ENCODE measurements at regions of chr1 and their contacts with region 1.

Region 1: DNA sequence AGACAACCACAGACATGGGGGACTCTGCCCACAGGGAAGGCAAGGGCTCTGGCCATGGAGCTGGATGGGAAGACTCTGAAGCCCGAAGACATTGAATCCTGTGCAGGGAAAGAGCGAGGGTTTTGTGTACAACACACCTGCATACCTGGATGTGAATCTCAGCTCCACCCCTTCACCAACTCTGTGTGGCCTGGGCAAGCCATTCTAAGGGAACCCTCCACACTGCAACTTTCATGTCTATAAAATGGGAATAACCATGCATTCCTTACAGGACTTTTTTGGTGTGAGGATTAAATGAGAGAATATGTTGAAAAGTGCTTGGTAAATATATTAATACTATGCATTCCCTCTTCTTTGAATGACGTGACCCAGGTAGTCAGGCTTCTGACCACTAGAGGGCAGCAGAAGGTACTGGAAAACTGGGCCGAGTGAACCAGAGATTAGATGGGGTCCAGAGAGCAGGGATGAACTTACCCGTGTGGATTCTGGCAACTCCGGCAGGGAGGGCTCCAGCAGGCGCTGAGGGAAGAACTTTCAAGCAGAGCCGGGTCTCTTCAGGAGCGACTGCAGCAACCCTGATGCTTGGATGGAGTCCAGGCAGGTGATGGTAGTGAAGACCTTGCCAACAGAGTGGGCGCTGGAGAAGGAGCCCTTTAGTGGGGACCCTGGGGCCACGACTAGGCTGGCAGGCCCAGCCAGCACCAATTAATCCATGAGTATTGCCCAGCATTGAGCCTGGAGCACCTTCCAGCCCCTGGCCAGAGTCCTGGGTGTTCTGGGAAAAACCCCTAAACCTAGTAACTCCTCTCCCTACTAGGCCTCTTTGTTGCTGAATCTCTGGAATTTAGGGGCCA is 834 bp upstream of the ELF3 start:
- DNase-seq: peak; percentile 34 to 45 (median 35)
- H3K4me3 ChIP-seq: no peak overlapping the region
- H3K4me3 Mint-ChIP-seq: no peak overlapping the region
- H3K27ac ChIP-seq: no peak overlapping the region
- H3K27ac Mint-ChIP-seq: peak overlapping the region in 1 of 7 donors; percentile 13
- H3K4me1 ChIP-seq: no peaks in the 10 kb centered on the region
- H3K4me1 Mint-ChIP-seq: no peaks in the 10 kb centered on the region
- H3K27me3 ChIP-seq: no peaks in the 10 kb centered on the region
- H3K27me3 Mint-ChIP-seq: peaks cover 0 to 2% (median 1%) of the 10 kb centered on the region in 3 donors
- CTCF ChIP-seq: peak; percentile 92

Region 2: DNA sequence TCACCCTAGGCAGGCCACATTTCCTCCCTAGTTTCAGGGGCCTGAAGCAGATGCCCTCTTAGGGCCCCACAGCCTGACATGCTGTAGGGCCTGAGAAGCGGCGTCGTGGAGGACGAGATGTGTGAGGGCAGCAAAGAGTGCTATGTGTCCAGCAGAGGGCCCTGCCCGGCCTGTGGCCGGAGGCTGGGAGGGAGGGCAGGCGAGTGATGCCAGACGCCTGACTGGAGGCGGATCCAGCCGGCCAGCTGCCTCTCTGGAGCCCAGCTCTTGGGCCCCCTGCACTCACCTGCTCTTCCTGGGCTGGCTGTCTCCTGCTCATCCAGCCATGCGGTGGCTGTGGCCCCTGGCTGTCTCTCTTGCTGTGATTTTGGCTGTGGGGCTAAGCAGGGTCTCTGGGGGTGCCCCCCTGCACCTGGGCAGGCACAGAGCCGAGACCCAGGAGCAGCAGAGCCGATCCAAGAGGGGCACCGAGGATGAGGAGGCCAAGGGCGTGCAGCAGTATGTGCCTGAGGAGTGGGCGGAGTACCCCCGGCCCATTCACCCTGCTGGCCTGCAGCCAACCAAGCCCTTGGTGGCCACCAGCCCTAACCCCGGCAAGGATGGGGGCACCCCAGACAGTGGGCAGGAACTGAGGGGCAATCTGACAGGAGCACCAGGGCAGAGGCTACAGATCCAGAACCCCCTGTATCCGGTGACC is 113.2 kb after region 1 on chr1 and contains the start of gene GPR37L1:
- intact Hi-C with region 1: loop called in 1 of 2 experiments (anchors 10 kb)
- DNase-seq: no peak
- H3K4me3 ChIP-seq: no peak within 1 kb of the TSS
- H3K4me3 Mint-ChIP-seq: no peak within 1 kb of the TSS
- H3K27ac ChIP-seq: no peak within 1 kb of the TSS
- H3K27ac Mint-ChIP-seq: no peak within 1 kb of the TSS
- H3K4me1 ChIP-seq: peaks cover 5 to 7% of the 10 kb centered on the region in 2 donors
- H3K4me1 Mint-ChIP-seq: peaks cover 14% of the 10 kb centered on the region
- H3K27me3 ChIP-seq: no peaks in the 10 kb centered on the region
- H3K27me3 Mint-ChIP-seq: peaks cover 3 to 7% (median 5%) of the 10 kb centered on the region in 3 donors
- CTCF ChIP-seq: no peak
- polyA plus RNA-seq, gene GPR37L1: 0.06 to 0.13 TPM in 2 of 3 donors, not detected in the other

Region 3: GRCh38 chr1:202349206-202349928 is 339.8 kb after region 1 on chr1:
- intact Hi-C with region 1: no loop called
- DNase-seq: peak; percentile 45 to 69 (median 57)
- H3K4me3 ChIP-seq: peak overlapping the region; percentile 71 to 97 (median 94)
- H3K4me3 Mint-ChIP-seq: peak overlapping the region; percentile 94 to 97
- H3K27ac ChIP-seq: peak overlapping the region; percentile 81 to 95
- H3K27ac Mint-ChIP-seq: peak overlapping the region; percentile 60 to 97 (median 94)
- H3K4me1 ChIP-seq: peaks cover 23 to 28% of the 10 kb centered on the region in 2 donors
- H3K4me1 Mint-ChIP-seq: peaks cover 41% of the 10 kb centered on the region
- H3K27me3 ChIP-seq: no peaks in the 10 kb centered on the region
- H3K27me3 Mint-ChIP-seq: peaks cover 0 to 3% (median 1%) of the 10 kb centered on the region in 3 donors
- CTCF ChIP-seq: no peak